AG04449 (cell line): ENCODE measurements at regions of chr17 and their contacts with region 1.

Region 1: DNA sequence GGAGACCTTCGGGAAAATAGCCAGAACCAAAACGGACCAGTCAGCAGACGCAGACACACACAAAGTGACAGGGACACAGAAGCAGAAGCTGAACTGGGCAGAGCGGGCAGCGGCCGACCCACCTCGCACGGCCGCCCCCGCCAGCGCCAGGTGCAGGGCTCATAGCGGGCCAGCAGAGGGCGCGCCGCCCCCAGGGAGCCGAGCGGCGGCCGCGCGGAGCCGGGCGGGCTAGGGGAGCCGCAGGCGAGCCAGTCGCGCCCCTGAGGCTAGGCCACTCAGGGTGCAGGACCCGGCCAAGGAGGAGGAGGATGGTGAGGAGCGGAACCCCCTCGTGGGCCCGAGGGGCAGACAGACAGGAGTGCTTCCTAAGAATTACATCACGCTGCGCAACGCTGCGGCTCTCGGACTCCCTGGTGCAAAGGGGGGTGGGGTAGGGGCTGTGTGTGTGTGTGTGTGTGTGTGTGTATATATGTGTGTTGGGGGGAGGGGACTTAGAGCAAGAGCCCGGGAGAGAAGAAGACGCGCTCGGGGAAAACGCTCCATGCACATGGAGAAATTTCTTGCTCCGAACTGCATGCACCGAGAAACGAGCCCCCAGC is 913 bp upstream of the NOG start:
- DNase-seq: no peak
- H3K4me3 ChIP-seq: peak overlapping the region; percentile 63
- CTCF ChIP-seq: peak; percentile 76

Region 2: DNA sequence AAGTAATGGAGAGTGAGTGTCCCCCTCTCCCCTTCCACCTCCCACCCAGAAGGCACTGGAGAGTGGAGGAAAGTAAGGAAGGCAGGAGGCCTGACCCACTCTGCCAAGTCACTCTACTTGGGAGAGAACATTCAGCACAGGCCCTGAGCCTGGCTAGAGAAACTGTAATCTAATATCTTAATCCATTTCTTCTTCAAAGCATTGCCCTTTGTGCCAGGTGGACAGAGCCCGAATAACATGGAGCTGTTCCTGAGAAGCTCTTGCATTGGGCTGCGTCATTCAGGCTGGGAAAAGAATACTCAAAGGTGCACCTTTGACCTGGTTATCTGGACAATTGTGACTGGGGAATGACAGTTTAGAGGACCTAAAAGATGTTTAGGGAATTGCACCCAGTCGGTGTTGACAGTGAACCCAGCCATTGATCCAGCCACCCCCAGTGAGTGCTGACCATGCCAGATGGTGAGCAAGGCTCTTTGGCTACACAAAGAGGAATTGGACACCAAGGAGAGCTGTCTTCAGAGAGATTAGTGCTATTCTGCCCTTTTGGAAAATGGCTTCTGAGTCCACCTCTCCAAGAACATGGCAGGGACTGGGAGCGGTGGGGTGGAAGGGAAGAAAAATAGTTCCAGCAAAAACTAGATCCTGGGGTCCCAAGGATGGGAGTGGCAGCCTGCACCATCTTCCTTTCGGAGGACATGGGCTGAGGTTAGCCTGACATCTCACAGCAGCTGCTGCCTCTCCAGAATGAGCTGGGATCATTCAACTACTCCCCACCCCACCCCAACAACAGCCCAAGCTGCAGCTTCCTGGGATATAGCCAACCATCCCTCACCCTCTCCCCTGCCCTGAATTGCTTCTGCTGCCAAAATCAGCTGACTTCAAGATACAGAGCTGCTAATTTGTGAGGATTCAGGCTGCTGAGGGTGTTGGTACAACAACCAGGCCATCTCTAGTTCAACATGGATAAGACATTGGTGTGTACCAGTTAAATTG is 10.7 kb before region 1 on chr17:
- CTCF ChIA-PET with region 1: interaction called, 20 read pairs
- POLR2A ChIA-PET with region 1: no interaction called
- DNase-seq: no peak
- H3K4me3 ChIP-seq: no peak overlapping the region
- CTCF ChIP-seq: no peak

Region 3: GRCh38 chr17:56679115-56679766 is 86.7 kb after region 1 on chr17:
- CTCF ChIA-PET with region 1: interaction called, 10 read pairs
- POLR2A ChIA-PET with region 1: no interaction called
- DNase-seq: no peak
- H3K4me3 ChIP-seq: peak overlapping the region; percentile 2
- CTCF ChIP-seq: peak; percentile 52